ENCODE measurements at regions of chr2 and their contacts with region 1.

Region 1: DNA sequence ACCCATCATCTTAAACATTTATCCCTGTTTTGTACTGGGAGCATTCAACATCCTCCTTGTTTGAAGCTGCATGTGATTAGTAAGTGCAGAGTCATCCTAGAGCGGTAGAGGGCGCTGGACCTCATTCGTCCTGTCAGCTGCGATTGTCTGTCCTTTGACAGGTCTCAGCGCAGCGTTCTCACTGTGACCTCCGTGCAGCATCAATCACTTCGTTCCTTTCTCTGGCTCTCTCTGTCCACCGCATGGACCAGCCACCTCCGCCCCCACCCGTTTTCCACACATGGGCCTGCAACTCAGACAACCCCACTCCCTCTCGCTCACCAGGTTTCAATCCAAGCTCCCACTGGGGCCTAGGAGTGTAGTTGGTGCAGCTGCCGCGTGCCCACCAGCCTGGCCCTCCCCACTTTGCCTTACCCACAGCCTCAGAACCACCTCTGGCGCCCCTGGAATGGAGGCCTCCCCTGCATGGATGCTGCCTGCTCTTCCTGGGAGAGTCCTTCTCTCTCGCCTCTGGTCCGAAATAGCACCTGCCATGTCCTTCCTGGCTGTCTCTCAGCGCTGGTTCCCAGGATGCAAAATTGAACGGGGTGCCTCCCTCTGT is 90.5 kb downstream of the NDUFA10 start:
- DNase-seq: peak; percentile 78
- H3K4me3 ChIP-seq: peak overlapping the region in 1 of 2 experiments; percentile 40; a peak in 1 of 4 replicates
- H3K27ac ChIP-seq: no peak overlapping the region
- H3K4me1 ChIP-seq: peaks cover 0 to 5% of the 10 kb centered on the region in 2 experiments; a peak in 1 of 4 replicates
- H3K27me3 ChIP-seq: no peaks in the 10 kb centered on the region
- CTCF ChIP-seq: peak; percentile 35
- EP300 ChIP-seq: no peak
- RAD21 ChIP-seq: peak; percentile 59

Region 2: GRCh38 chr2:239293775-239294430 is 640.8 kb before region 1 on chr2:
- CTCF ChIA-PET with region 1: no interaction called
- POLR2A ChIA-PET with region 1: no interaction called
- DNase-seq: no peak
- H3K4me3 ChIP-seq: no peak overlapping the region
- H3K27ac ChIP-seq: no peak overlapping the region
- H3K4me1 ChIP-seq: peaks cover 0 to 47% of the 10 kb centered on the region in 2 experiments; a peak in 2 of 4 replicates
- H3K27me3 ChIP-seq: no peaks in the 10 kb centered on the region
- CTCF ChIP-seq: no peak
- EP300 ChIP-seq: no peak
- RAD21 ChIP-seq: no peak

Region 3: DNA sequence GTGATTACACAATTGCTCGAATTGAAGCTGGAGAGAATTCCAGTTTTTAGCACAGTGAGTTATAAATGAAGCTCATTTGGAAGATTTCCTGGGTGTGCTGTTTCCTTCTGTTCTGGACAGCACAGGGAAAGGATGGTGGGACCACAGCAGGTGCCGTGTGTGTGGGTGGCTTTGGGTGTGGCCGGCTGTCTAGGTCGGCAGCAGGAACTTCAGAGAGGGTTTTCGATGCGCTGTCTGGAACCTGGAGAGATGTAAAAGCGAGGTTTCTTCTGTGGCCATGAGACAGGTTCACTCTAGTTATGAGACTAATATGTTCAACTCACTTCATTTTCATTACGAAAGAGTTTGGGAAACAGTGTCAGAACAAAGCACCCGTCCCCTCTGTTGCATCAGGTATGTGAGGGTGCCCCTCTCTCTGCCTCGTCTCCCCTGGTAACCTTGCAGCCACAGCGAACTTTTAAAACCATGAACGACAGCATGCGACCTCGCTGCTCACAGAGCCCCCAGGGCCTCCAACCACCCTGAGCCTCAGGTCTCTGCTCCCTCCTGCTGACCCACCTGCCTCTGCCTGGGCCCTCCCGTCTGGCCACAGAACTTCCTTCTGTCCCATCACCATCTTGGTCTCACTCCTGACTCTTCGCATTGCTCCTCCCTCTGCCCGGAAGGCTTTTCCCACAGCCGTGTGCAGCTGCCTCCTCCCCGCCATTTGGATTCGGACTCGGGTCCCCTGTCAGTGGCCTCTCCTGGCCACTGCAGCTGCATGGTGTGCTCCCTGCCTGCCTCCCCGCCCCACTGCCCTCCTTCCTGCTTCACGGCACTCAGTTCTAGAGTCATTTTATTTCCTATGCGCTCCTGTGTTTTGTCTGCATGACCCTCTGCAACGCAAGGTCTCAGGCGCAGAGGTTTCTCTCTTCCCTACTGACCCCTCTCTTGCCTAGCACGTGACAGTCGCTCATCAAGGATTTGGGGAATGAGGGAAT is 60.7 kb before region 1 on chr2:
- CTCF ChIA-PET with region 1: no interaction called
- POLR2A ChIA-PET with region 1: no interaction called
- DNase-seq: no peak
- H3K4me3 ChIP-seq: no peak overlapping the region
- H3K27ac ChIP-seq: no peak overlapping the region
- H3K4me1 ChIP-seq: no peaks in the 10 kb centered on the region; a peak in 1 of 4 replicates
- H3K27me3 ChIP-seq: no peaks in the 10 kb centered on the region
- CTCF ChIP-seq: no peak
- EP300 ChIP-seq: no peak
- RAD21 ChIP-seq: no peak

Region 4: GRCh38 chr2:239944694-239945551 is 10.3 kb after region 1 on chr2:
- CTCF ChIA-PET with region 1: interaction called, 50 read pairs
- POLR2A ChIA-PET with region 1: no interaction called
- DNase-seq: no peak
- H3K4me3 ChIP-seq: no peak overlapping the region
- H3K27ac ChIP-seq: no peak overlapping the region
- H3K4me1 ChIP-seq: no peaks in the 10 kb centered on the region; a peak in 1 of 4 replicates
- H3K27me3 ChIP-seq: no peaks in the 10 kb centered on the region
- CTCF ChIP-seq: no peak
- EP300 ChIP-seq: no peak
- RAD21 ChIP-seq: no peak

Region 5: GRCh38 chr2:239959059-239959971 is 24.6 kb after region 1 on chr2:
- CTCF ChIA-PET with region 1: interaction called, 19 read pairs
- POLR2A ChIA-PET with region 1: no interaction called
- DNase-seq: no peak
- H3K4me3 ChIP-seq: no peak overlapping the region
- H3K27ac ChIP-seq: no peak overlapping the region; a peak in 1 of 4 replicates
- H3K4me1 ChIP-seq: peaks cover 0 to 10% of the 10 kb centered on the region in 2 experiments; a peak in 1 of 4 replicates
- H3K27me3 ChIP-seq: no peaks in the 10 kb centered on the region
- CTCF ChIP-seq: no peak
- EP300 ChIP-seq: no peak
- RAD21 ChIP-seq: no peak

Region 6: DNA sequence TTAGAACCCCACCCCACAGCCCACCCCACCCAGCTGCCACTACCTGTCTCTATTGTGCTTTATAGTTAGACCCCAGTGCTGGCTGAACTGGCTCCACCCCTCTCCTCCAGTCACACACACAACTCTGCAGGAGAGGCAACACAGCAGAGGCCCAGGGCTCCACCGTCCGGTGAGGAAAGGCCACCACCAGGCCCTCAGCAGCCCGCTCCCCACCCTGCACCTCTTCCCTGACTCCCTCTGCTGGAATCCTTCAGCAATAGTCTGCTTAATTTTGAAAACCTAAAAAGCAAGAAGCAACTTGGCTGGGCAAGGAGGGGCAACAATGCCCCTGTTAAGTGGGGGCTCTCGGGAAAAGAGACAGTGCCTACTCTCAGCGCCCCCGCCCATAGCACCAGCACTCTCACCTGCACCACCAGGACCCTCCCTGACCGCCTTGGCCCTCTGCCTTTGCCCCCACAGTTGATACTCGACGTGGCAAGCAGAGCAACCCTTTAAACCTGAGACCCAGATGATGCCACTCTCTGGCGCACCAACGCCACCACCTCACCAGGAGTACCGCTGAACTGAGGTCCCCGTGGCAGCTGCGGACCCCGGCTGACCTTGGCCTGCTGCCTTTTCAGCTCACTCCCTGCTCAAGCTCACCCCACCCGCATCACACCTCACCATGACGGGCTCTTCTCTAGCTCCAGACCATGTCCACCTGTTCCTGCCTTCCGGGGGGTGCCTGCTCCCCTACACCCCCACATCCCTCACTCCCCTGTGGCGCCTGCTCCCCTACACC is 44.8 kb after region 1 on chr2:
- CTCF ChIA-PET with region 1: interaction called, 11 read pairs
- POLR2A ChIA-PET with region 1: no interaction called
- DNase-seq: no peak
- H3K4me3 ChIP-seq: no peak overlapping the region
- H3K27ac ChIP-seq: no peak overlapping the region
- H3K4me1 ChIP-seq: no peaks in the 10 kb centered on the region
- H3K27me3 ChIP-seq: no peaks in the 10 kb centered on the region
- CTCF ChIP-seq: no peak
- EP300 ChIP-seq: no peak
- RAD21 ChIP-seq: no peak

Region 7: GRCh38 chr2:240021488-240022104 is 86.9 kb after region 1 on chr2:
- CTCF ChIA-PET with region 1: interaction called, 10 read pairs
- POLR2A ChIA-PET with region 1: no interaction called
- DNase-seq: peak; percentile 85
- H3K4me3 ChIP-seq: no peak overlapping the region; a peak in 1 of 4 replicates
- H3K27ac ChIP-seq: no peak overlapping the region
- H3K4me1 ChIP-seq: peaks cover 6 to 10% of the 10 kb centered on the region in 2 experiments; a peak in 3 of 4 replicates
- H3K27me3 ChIP-seq: no peaks in the 10 kb centered on the region
- CTCF ChIP-seq: peak; percentile 83
- EP300 ChIP-seq: no peak
- RAD21 ChIP-seq: peak; percentile 57

Region 8: DNA sequence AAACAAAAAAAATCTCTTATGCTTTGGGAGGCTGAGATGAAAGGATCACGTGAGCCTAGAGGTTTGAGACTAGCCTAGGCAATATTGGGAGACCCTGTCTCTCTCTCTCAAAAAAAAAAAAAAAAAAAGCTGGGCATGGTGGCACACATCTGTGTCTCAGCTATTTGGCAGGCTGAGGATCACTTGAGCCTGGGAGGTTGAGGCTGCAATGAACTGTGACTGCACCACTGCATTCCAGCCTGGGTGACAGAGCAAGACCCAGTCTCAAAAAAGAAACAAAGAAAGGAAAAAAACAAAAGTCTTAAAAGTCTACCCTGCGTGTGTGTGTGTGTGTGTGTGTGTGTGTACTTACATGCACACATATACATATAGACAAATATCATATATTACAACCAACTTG is 144.0 kb after region 1 on chr2:
- CTCF ChIA-PET with region 1: no interaction called
- POLR2A ChIA-PET with region 1: no interaction called
- DNase-seq: no peak
- H3K4me3 ChIP-seq: no peak overlapping the region
- H3K27ac ChIP-seq: no peak overlapping the region
- H3K4me1 ChIP-seq: no peaks in the 10 kb centered on the region; a peak in 1 of 4 replicates
- H3K27me3 ChIP-seq: no peaks in the 10 kb centered on the region
- CTCF ChIP-seq: no peak
- EP300 ChIP-seq: no peak
- RAD21 ChIP-seq: no peak

Region 9: GRCh38 chr2:240095556-240096523 is 161.2 kb after region 1 on chr2:
- CTCF ChIA-PET with region 1: no interaction called
- POLR2A ChIA-PET with region 1: no interaction called
- DNase-seq: peak; percentile 20
- H3K4me3 ChIP-seq: no peak overlapping the region
- H3K27ac ChIP-seq: no peak overlapping the region
- H3K4me1 ChIP-seq: no peaks in the 10 kb centered on the region
- H3K27me3 ChIP-seq: peaks cover 14% of the 10 kb centered on the region; the same call in 1 of the 2 replicates
- CTCF ChIP-seq: no peak
- EP300 ChIP-seq: no peak
- RAD21 ChIP-seq: no peak